ENCODE measurements at regions of chr6 and their contacts with region 1.

Region 1: GRCh38 chr6:129672881-129673643 is 36.9 kb downstream of the ARHGAP18 start:
- DNase-seq: peak in 1 of 5 donors; percentile 16
- H3K4me3 ChIP-seq: peak overlapping the region; percentile 54
- H3K4me3 Mint-ChIP-seq: peak overlapping the region; percentile 59 to 94 (median 85)
- H3K27ac ChIP-seq: peak overlapping the region; percentile 62
- H3K27ac Mint-ChIP-seq: peak overlapping the region; percentile 43 to 99 (median 92)
- H3K4me1 ChIP-seq: peaks cover 22% of the 10 kb centered on the region
- H3K4me1 Mint-ChIP-seq: peaks cover 29 to 43% (median 34%) of the 10 kb centered on the region in 3 donors
- H3K27me3 ChIP-seq: no peaks in the 10 kb centered on the region
- H3K27me3 Mint-ChIP-seq: peaks cover 0 to 3% of the 10 kb centered on the region in 2 donors

Region 2: GRCh38 chr6:129646642-129647041 is 26.4 kb before region 1 on chr6:
- CTCF ChIA-PET with region 1: no interaction called
- POLR2A ChIA-PET with region 1: no interaction called
- DNase-seq: no peak
- H3K4me3 ChIP-seq: no peak overlapping the region
- H3K4me3 Mint-ChIP-seq: no peak overlapping the region
- H3K27ac ChIP-seq: no peak overlapping the region
- H3K27ac Mint-ChIP-seq: no peak overlapping the region
- H3K4me1 ChIP-seq: no peaks in the 10 kb centered on the region
- H3K4me1 Mint-ChIP-seq: peaks cover 0 to 9% (median 0%) of the 10 kb centered on the region in 3 donors
- H3K27me3 ChIP-seq: no peaks in the 10 kb centered on the region
- H3K27me3 Mint-ChIP-seq: no peaks in the 10 kb centered on the region

Region 3: DNA sequence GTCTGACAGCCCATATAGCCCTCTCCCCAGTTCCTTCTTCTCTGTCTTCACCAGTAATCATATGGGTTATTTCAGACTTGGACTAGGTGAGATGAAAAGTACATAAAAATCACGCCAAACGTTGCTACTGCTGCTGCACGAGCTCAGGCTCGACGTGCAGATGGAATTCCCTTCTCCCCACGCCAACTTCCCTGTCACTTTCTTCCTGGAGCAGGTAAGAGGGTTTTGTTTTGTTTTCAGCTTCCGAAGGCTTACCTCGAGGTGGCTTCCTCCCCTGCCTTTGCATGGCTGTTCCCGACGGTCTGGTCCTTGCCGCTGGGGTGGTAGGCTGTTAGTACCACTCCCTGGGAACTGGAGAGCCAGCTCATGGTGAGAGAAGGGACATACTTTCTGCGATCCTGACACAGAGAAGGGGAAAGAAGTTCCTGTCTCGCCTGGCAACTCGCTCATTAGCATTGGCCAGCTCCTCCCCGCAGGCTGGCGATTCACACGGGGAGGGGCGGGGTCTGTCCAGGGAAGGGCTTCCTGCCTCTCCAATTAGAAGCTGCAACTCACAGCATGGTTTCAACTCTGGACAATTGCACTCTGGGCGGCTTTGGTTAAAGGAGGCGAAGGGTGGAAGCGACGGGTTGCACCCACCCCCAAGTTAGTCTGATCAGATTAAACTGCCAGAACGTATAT is 36.8 kb after region 1 on chr6 and contains the start of gene ARHGAP18:
- CTCF ChIA-PET with region 1: interaction called, 14 read pairs
- POLR2A ChIA-PET with region 1: no interaction called
- DNase-seq: peak; percentile 56 to 81 (median 70)
- H3K4me3 ChIP-seq: peak within 1 kb of the TSS; percentile 79
- H3K4me3 Mint-ChIP-seq: peak within 1 kb of the TSS; percentile 97 to 100 (median 99)
- H3K27ac ChIP-seq: peak within 1 kb of the TSS; percentile 74
- H3K27ac Mint-ChIP-seq: peak within 1 kb of the TSS; percentile 69 to 97 (median 94)
- H3K4me1 ChIP-seq: peaks cover 13% of the 10 kb centered on the region
- H3K4me1 Mint-ChIP-seq: peaks cover 49 to 61% (median 58%) of the 10 kb centered on the region in 3 donors
- H3K27me3 ChIP-seq: no peaks in the 10 kb centered on the region
- H3K27me3 Mint-ChIP-seq: peaks cover 0 to 7% of the 10 kb centered on the region in 2 donors
- total RNA-seq, gene ARHGAP18: 6.5 to 7.2 TPM

Region 4: DNA sequence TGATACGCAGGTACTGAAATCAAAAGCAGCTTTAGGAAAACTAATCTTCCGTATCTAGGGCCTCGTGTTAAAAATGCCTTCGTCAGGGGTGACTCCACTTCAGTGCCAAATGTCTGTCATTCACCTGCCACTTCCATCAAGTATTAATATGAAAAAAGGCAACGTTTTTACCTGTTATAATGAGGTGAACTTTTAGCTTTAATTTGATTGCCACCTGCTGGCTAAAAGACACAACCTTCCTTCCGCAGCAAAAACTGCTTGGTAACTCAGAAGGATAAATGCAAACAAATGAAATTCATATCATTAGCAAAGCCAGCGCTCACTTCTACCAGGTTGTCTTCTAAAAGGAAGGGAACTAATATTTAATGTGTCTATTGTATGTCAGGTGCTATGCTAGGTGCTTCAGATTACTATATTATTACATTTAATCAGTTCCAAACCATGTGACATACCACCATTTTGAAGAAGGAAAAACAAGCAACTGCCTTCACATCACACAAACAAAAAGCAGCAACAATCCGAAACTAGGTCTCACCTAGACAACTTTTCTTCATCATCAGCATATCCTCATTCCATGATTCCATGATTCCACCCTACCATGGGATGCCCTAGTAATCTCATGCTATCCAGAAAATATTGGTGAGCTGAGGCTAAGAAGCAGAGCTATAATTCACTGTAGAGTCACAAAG is 57.6 kb after region 1 on chr6:
- CTCF ChIA-PET with region 1: interaction called, 38 read pairs
- POLR2A ChIA-PET with region 1: no interaction called
- DNase-seq: peak in 3 of 5 donors; percentile 37 to 50 (median 41)
- H3K4me3 ChIP-seq: no peak overlapping the region
- H3K4me3 Mint-ChIP-seq: no peak overlapping the region
- H3K27ac ChIP-seq: no peak overlapping the region
- H3K27ac Mint-ChIP-seq: peak overlapping the region in 2 of 8 donors; percentile 33 to 37
- H3K4me1 ChIP-seq: no peaks in the 10 kb centered on the region
- H3K4me1 Mint-ChIP-seq: peaks cover 14 to 22% (median 16%) of the 10 kb centered on the region in 3 donors
- H3K27me3 ChIP-seq: no peaks in the 10 kb centered on the region
- H3K27me3 Mint-ChIP-seq: no peaks in the 10 kb centered on the region

Measured in CD8-positive, alpha-beta memory T cell (primary cell).